Adrenal gland (tissue), 19 donors: ENCODE measurements at regions of chr2 and their contacts with region 1.

Region 1: DNA sequence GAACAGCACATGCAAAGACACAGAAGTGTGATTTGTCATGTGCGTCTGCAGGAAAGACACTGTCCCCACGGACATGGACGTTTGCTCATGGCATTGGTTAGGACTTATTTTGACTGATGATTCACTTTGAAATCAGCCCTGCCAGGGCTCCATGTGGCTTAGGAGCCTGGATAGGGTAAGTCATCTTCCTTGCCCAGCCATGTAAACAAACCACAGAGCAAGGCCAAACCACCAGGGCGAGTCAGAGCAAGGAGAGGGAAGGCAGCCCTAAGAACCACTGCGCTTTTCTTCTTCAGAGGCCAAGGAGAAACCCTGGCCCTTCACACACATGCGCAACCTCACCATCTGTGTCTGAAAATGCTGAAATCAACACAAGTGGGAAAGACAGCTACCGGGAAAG is 88.8 kb downstream of the GFPT1 start:
- DNase-seq: peak; percentile 46 to 80 (median 76)
- H3K4me3 ChIP-seq: no peak overlapping the region
- H3K27ac ChIP-seq: peak overlapping the region in 3 of 5 donors; percentile 37 to 51 (median 44)
- H3K4me1 ChIP-seq: peaks cover 0 to 9% of the 10 kb centered on the region in 2 donors
- H3K27me3 ChIP-seq: no peaks in the 10 kb centered on the region
- CTCF ChIP-seq: no peak
- POLR2A ChIP-seq: peak in 1 of 2 donors; percentile 40

Region 2: GRCh38 chr2:69200107-69200520 is 98.1 kb before region 1 on chr2:
- intact Hi-C with region 1: loop called in 1 of 2 experiments (anchors 10 kb)
- DNase-seq: no peak
- H3K4me3 ChIP-seq: no peak overlapping the region
- H3K27ac ChIP-seq: peak overlapping the region in 3 of 5 donors; percentile 15 to 40 (median 16)
- H3K4me1 ChIP-seq: peaks cover 8 to 21% of the 10 kb centered on the region in 2 donors
- H3K27me3 ChIP-seq: no peaks in the 10 kb centered on the region
- CTCF ChIP-seq: no peak
- POLR2A ChIP-seq: no peak